ENCODE measurements at regions of chr10 and their contacts with region 1.

Region 1: DNA sequence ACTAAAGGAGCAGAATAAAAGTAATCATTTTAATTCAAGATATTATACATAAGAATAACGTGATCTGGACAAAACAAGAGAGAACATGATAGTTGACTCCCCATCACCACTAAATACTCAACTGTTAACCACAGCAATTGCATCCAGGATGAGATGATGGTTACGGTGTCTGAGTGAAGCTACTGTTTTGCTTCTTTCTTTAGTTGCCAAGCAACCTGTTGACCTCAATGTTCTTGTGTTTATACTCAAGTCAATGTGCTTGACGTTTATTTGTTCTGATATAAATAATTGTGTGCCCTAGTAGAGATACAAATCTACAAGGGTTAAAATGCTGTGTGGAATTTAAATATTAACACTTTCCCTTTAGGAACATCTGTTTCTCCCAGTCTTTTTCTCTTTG is 31.4 kb upstream of the MPP7 start:
- DNase-seq: peak in 4 of 5 donors; percentile 50 to 92 (median 84)
- H3K4me3 ChIP-seq: peak overlapping the region; percentile 63
- H3K4me3 Mint-ChIP-seq: peak overlapping the region; percentile 91 to 98 (median 97)
- H3K27ac ChIP-seq: peak overlapping the region; percentile 99
- H3K27ac Mint-ChIP-seq: peak overlapping the region; percentile 100
- H3K4me1 ChIP-seq: peaks cover 58% of the 10 kb centered on the region
- H3K4me1 Mint-ChIP-seq: peaks cover 53 to 74% (median 63%) of the 10 kb centered on the region in 3 donors
- H3K27me3 ChIP-seq: no peaks in the 10 kb centered on the region
- H3K27me3 Mint-ChIP-seq: peaks cover 0 to 2% of the 10 kb centered on the region in 2 donors

Region 2: GRCh38 chr10:28367929-28368484 is 33.7 kb after region 1 on chr10:
- CTCF ChIA-PET with region 1: interaction called, 32 read pairs
- POLR2A ChIA-PET with region 1: interaction called, 52 read pairs
- DNase-seq: peak; percentile 6 to 84 (median 77)
- H3K4me3 ChIP-seq: peak overlapping the region; percentile 19
- H3K4me3 Mint-ChIP-seq: peak overlapping the region; percentile 23 to 85 (median 74)
- H3K27ac ChIP-seq: peak overlapping the region; percentile 44
- H3K27ac Mint-ChIP-seq: peak overlapping the region; percentile 86 to 98 (median 94)
- H3K4me1 ChIP-seq: peaks cover 51% of the 10 kb centered on the region
- H3K4me1 Mint-ChIP-seq: peaks cover 36 to 53% (median 51%) of the 10 kb centered on the region in 3 donors
- H3K27me3 ChIP-seq: no peaks in the 10 kb centered on the region
- H3K27me3 Mint-ChIP-seq: no peaks in the 10 kb centered on the region

Region 3: DNA sequence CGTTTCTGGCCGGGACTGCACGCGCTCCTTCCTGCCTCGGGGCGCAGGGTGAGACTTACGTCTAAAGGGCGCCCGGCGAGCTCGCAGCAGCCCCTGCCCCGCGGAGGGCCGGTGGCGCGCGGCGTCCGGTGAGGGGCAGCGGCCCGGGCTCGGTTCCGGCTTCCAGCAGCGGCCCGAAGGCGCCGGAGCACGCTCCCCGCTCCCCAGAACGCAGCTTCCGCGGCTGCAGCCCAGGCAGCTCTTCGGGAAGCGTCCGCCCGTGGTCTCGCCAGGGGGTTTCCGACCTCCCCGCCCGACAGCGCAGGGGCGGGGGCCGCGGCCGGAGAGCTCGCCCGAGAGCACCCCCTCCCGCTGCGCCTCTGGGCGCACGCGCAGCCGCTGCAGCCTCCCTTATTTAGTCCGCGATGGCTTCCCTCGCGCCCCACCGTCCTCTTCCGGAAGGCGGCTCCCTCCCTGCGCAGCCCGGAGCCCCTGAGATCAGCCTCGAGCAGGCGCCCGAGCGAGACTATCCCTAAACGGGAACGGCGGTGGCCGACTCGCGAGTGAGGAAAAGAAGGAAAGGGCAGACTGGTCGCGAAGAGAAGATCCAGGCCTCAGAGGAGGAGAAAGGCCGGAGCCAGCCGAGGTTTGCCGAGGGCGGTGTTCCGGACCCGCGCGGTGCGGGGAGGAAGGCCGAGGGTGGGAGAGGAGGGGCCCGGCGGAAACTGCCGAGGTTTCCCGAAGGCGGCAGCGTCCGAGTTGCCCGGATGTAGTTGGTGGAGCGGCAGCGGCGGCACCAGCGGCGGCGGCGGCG is 198.3 kb after region 1 on chr10 and contains the start of gene WAC:
- CTCF ChIA-PET with region 1: no interaction called
- POLR2A ChIA-PET with region 1: interaction called, 15 read pairs
- DNase-seq: peak; percentile 96 to 98 (median 96)
- H3K4me3 ChIP-seq: peak within 1 kb of the TSS; percentile 82
- H3K4me3 Mint-ChIP-seq: peak within 1 kb of the TSS; percentile 98 to 99 (median 99)
- H3K27ac ChIP-seq: peak within 1 kb of the TSS; percentile 98
- H3K27ac Mint-ChIP-seq: peak within 1 kb of the TSS; percentile 96 to 100 (median 100)
- H3K4me1 ChIP-seq: peaks cover 40% of the 10 kb centered on the region
- H3K4me1 Mint-ChIP-seq: peaks cover 56 to 82% (median 75%) of the 10 kb centered on the region in 3 donors
- H3K27me3 ChIP-seq: no peaks in the 10 kb centered on the region
- H3K27me3 Mint-ChIP-seq: peaks cover 0 to 6% of the 10 kb centered on the region in 2 donors
- total RNA-seq, gene WAC: 134 to 142 TPM

Measured in CD8-positive, alpha-beta memory T cell (primary cell).